Body of pancreas (tissue), 4 donors: ENCODE measurements at regions of chr3 and their contacts with region 1.

Region 1: DNA sequence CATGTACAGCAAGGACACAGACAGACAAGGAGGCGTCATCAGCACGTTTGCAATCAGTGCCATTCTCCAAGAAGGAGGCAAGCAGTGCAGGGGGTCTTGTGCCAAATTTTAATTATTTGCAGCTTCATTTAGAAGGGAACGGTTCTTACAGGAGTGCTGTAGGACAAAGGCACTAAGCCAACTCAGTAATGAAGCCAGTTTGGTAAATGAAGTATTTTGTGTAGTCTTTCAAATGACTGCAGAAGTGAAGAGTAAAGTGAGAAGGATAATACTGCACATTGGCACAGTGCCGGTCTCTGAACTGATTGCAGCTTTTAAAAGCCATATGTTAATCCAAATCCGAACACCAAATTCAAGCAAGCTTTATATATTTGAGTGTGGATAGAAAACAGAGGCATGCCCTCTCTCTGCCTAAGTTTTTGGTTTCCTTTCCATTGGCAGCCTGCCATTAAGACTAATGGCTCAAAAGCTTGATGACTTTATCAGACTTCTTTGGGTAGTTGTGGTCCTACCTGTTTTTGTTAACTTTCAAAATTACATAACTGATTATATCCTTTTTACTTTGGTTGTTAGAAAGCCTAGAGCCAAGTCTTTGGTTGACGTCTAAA is 101.3 kb downstream of the SENP2 start:
- DNase-seq: no peak
- ATAC-seq: no peak
- H3K4me3 ChIP-seq: no peak overlapping the region
- H3K27ac ChIP-seq: no peak overlapping the region
- H3K4me1 ChIP-seq: no peaks in the 10 kb centered on the region
- H3K27me3 ChIP-seq: no peaks in the 10 kb centered on the region
- CTCF ChIP-seq: no peak
- POLR2A ChIP-seq: no peak

Region 2: GRCh38 chr3:185764163-185764979 is 77.0 kb after region 1 on chr3:
- intact Hi-C with region 1: loop called (anchors 10 kb)
- DNase-seq: no peak
- ATAC-seq: no peak
- H3K4me3 ChIP-seq: no peak overlapping the region
- H3K27ac ChIP-seq: peak overlapping the region in 3 of 4 donors; percentile 4 to 31 (median 17)
- H3K4me1 ChIP-seq: peaks cover 14% of the 10 kb centered on the region
- H3K27me3 ChIP-seq: no peaks in the 10 kb centered on the region
- CTCF ChIP-seq: no peak
- POLR2A ChIP-seq: no peak